ENCODE measurements at regions of chr22 and their contacts with region 1.

Region 1: DNA sequence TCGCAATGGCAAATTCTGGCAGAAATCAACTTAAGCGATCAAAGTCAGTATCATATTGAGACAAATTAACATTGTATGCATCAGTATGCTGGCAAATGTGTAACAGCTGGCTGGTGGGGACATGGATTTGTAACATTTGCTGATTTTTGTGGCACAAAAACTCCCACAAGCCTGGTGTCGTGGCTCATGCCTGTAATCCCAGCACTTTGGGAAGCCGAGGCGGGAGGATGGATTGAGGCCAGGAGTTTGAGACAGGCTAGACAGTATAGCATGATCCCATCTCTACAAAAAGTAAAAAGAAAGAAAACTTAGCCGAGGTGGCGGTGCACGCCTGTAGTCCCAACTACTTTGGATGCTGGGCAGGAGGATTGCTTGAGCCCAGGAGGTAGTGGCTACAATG is 17.6 kb upstream of the HDHD5 start:
- DNase-seq: peak in 1 of 2 donors; percentile 28
- ATAC-seq: no peak
- H3K4me3 ChIP-seq: no peak overlapping the region
- H3K27ac ChIP-seq: no peak overlapping the region
- H3K4me1 ChIP-seq: peaks cover 9% of the 10 kb centered on the region
- H3K27me3 ChIP-seq: no peaks in the 10 kb centered on the region
- CTCF ChIP-seq: no peak

Region 2: DNA sequence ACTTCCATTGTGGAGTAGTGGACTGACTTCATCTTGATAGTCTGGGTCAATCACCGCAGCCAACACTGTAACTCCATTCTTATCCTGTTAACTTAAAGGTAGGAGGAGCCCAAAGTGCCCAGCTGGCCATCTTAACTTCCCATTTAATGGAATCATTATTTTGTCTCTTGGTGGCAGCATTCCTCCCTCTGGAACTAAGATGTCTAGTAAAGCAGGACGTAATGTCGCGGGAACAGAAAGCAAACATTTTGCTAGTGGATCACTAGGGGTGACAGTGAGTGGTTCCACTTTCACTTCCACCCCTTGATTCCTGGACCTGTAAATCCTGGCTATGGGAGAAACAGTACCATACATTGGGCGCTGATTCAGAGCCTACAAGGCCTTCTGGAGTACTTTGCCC is 240.1 kb before region 1 on chr22:
- intact Hi-C with region 1: no loop called
- DNase-seq: no peak
- ATAC-seq: no peak
- H3K4me3 ChIP-seq: no peak overlapping the region
- H3K27ac ChIP-seq: no peak overlapping the region
- H3K4me1 ChIP-seq: no peaks in the 10 kb centered on the region
- H3K27me3 ChIP-seq: peaks cover 0 to 7% (median 3%) of the 10 kb centered on the region in 3 donors
- CTCF ChIP-seq: no peak

Region 3: GRCh38 chr22:16975155-16975885 is 201.4 kb before region 1 on chr22:
- intact Hi-C with region 1: no loop called
- DNase-seq: no peak
- ATAC-seq: no peak
- H3K4me3 ChIP-seq: no peak overlapping the region
- H3K27ac ChIP-seq: no peak overlapping the region
- H3K4me1 ChIP-seq: no peaks in the 10 kb centered on the region
- H3K27me3 ChIP-seq: peaks cover 0 to 9% (median 3%) of the 10 kb centered on the region in 3 donors
- CTCF ChIP-seq: no peak

Region 4: DNA sequence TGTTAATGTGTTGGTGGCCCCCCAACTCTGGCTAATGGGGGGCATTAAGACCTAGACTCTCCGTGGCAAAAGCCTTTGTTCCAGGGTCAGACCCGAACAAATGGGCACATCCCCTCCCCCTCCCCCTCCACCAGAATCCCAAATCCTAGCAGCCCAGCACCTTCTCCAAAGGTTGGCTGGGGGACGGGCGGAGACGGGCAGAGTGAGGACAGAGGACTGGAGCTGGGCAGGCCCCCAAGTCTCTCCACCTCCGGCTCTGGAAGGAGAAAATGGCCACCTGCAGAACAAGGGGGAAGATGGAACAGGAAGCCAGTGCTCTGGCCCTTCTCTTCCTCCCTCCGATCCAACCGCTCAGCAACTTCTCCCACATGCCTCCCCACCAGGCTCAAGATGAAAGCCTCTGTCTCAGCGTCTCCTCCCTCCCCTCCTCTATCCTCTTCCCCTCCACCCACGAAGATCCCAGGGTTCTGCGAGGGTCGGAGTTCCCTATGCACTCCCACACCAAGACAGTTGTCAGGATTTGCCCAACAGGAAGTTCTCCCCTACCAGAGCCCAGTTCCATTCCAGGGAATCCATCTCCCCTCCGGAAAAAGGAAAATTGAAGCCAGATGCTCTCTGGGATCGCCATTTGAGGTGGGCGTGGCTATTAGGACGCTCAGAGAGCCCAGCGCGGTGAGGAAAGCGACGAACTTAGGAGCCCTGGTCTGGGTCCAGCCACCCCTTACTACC is 22.5 kb after region 1 on chr22:
- intact Hi-C with region 1: loop called in 1 of 2 experiments (anchors 2 kb)
- DNase-seq: peak; percentile 45 to 67
- ATAC-seq: peak; percentile 41 to 63 (median 52)
- H3K4me3 ChIP-seq: peak overlapping the region; percentile 58
- H3K27ac ChIP-seq: peak overlapping the region; percentile 63
- H3K4me1 ChIP-seq: no peaks in the 10 kb centered on the region
- H3K27me3 ChIP-seq: no peaks in the 10 kb centered on the region
- CTCF ChIP-seq: no peak